ENCODE measurements at regions of chr1 and their contacts with region 1.

Region 1: DNA sequence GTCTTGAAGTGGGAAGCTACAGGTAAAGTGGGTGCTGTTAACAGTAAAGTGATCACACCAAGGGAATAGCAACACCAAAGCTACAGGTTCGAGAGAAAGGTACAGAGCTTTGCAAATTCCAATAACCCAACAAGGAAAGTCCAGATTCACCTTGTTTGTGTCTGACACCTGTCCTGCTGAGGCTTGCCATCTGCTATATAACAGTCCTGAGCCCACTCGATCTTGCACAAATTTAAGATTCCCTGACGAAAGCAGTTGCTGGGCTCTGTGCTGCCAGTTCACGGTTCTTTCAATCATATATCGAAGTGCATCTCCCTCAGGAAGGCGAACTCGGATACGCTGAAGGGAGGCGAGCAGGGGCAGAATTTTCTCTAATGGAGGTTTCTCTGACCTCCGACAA is 23.0 kb upstream of the SYT2 start:
- DNase-seq: no peak
- ATAC-seq: no peak
- H3K4me3 ChIP-seq: no peak overlapping the region
- H3K27ac ChIP-seq: no peak overlapping the region
- H3K4me1 ChIP-seq: no peaks in the 10 kb centered on the region
- H3K27me3 ChIP-seq: no peaks in the 10 kb centered on the region
- CTCF ChIP-seq: no peak
- POLR2A ChIP-seq: no peak
- RAD21 ChIP-seq: no peak

Region 2: GRCh38 chr1:202750758-202751157 is 17.5 kb after region 1 on chr1:
- CTCF ChIA-PET with region 1: no interaction called
- POLR2A ChIA-PET with region 1: no interaction called
- RAD21 ChIA-PET with region 1: no interaction called
- intact Hi-C with region 1: no loop called
- DNase-seq: no peak
- ATAC-seq: no peak
- H3K4me3 ChIP-seq: no peak overlapping the region
- H3K27ac ChIP-seq: no peak overlapping the region
- H3K4me1 ChIP-seq: no peaks in the 10 kb centered on the region
- H3K27me3 ChIP-seq: no peaks in the 10 kb centered on the region
- CTCF ChIP-seq: peak in 2 of 3 experiments; percentile 20 to 23; a peak in 2 of 6 replicates
- POLR2A ChIP-seq: no peak
- RAD21 ChIP-seq: peak; percentile 52

Region 3: GRCh38 chr1:202770135-202770534 is 36.9 kb after region 1 on chr1:
- CTCF ChIA-PET with region 1: no interaction called
- POLR2A ChIA-PET with region 1: no interaction called
- RAD21 ChIA-PET with region 1: no interaction called
- intact Hi-C with region 1: loop called (anchors 5 kb)
- DNase-seq: no peak
- ATAC-seq: no peak
- H3K4me3 ChIP-seq: no peak overlapping the region
- H3K27ac ChIP-seq: no peak overlapping the region
- H3K4me1 ChIP-seq: no peaks in the 10 kb centered on the region
- H3K27me3 ChIP-seq: no peaks in the 10 kb centered on the region
- CTCF ChIP-seq: no peak
- POLR2A ChIP-seq: no peak
- RAD21 ChIP-seq: no peak

Measured in HCT116 (cell line).